HCT116 (cell line): ENCODE measurements at regions of chr7 and their contacts with region 1.

Region 1: DNA sequence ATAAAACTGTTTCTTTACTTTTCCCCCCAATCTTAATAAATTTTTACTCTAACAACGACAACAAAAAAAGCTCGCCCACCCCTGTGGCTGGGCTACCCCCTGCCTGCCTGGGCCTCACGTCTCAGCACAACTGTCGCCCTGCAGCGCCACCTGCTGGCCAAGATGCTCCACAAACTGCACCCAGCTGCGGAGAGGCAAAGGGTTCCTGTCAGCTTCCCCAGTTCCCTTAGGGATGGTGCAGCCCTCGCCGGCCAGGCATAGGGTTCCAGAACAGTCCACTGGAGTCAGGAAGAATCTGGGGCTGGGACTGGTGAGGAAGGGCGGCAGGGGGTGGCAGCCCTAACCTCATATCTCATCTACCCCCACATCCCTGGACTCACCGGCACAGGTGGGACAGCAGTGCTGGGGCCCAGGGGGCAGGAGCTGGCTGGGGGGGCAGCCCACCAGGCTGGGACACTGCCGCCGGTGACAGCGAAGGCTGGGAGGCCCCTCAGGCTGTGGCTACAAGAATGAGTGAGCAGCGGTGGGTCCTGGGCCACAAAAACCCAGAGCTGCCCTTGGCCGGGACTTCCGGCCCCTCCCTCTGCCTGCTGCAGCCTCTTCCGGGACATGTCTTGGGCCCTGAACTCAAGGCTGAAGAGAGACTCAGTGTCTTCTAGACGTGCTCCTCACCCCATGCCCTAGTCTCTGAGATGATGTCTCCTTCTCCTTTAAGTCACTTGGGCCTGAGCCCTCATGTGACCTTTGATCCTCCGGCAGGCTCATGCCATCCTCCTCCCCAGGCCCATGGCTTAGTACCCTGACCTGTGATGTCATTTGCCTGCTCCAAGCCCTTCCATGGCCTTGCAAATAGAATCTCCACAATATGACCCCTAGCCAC is 21.2 kb downstream of the ATP6V1F start:
- DNase-seq: peak; percentile 58
- ATAC-seq: peak; percentile 71
- H3K4me3 ChIP-seq: no peak overlapping the region
- H3K27ac ChIP-seq: no peak overlapping the region
- H3K4me1 ChIP-seq: peaks cover 0 to 15% of the 10 kb centered on the region in 2 experiments; a peak in 2 of 4 replicates
- H3K27me3 ChIP-seq: no peaks in the 10 kb centered on the region
- CTCF ChIP-seq: peak in 2 of 3 experiments; percentile 83 to 97; a peak in 4 of 6 replicates
- POLR2A ChIP-seq: no peak
- RAD21 ChIP-seq: no peak

Region 2: DNA sequence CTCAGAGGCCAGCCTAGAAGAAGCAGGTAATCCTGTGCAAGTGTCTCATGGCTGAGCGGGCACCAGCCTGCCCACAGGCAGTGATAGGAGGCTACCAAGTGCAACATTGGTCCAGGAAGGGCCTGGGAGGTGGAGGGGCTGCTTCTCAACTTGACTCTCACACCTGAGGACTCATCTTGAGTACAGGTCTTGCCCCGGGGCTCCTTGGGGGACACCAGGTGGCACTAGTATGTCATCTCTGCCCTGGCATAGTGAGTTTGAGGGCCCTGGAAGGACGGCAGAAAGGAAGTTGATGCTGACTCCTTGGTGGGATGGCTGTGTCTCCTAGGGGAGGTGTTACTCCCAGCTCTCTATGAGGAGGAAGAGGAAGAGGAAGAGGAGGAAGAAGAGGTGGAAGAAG is 89.8 kb before region 1 on chr7:
- CTCF ChIA-PET with region 1: interaction called, 3 read pairs
- POLR2A ChIA-PET with region 1: no interaction called
- RAD21 ChIA-PET with region 1: no interaction called
- intact Hi-C with region 1: loop called (anchors 1 kb)
- DNase-seq: no peak
- ATAC-seq: no peak
- H3K4me3 ChIP-seq: no peak overlapping the region
- H3K27ac ChIP-seq: no peak overlapping the region
- H3K4me1 ChIP-seq: peaks cover 0 to 6% of the 10 kb centered on the region in 2 experiments; a peak in 1 of 4 replicates
- H3K27me3 ChIP-seq: no peaks in the 10 kb centered on the region
- CTCF ChIP-seq: peak; percentile 29 to 82 (median 31)
- POLR2A ChIP-seq: no peak
- RAD21 ChIP-seq: peak; percentile 85

Region 3: GRCh38 chr7:128862571-128863432 is 21.1 kb before region 1 on chr7 and contains the start of gene ATP6V1F:
- CTCF ChIA-PET with region 1: interaction called, 16 read pairs
- POLR2A ChIA-PET with region 1: no interaction called
- RAD21 ChIA-PET with region 1: interaction called in 1 of 2 experiments, 7 read pairs
- intact Hi-C with region 1: loop called (anchors 2 kb)
- DNase-seq: peak; percentile 95
- ATAC-seq: peak; percentile 88
- H3K4me3 ChIP-seq: peak within 1 kb of the TSS; percentile 79 to 96
- H3K27ac ChIP-seq: peak within 1 kb of the TSS; percentile 53
- H3K4me1 ChIP-seq: peaks cover 10 to 20% of the 10 kb centered on the region in 2 experiments; a peak in 3 of 4 replicates
- H3K27me3 ChIP-seq: no peaks in the 10 kb centered on the region
- CTCF ChIP-seq: no peak
- POLR2A ChIP-seq: peak; percentile 71
- RAD21 ChIP-seq: no peak
- total RNA-seq, gene ATP6V1F: 149 TPM